ENCODE measurements at regions of chr4 and their contacts with region 1.

Region 1: DNA sequence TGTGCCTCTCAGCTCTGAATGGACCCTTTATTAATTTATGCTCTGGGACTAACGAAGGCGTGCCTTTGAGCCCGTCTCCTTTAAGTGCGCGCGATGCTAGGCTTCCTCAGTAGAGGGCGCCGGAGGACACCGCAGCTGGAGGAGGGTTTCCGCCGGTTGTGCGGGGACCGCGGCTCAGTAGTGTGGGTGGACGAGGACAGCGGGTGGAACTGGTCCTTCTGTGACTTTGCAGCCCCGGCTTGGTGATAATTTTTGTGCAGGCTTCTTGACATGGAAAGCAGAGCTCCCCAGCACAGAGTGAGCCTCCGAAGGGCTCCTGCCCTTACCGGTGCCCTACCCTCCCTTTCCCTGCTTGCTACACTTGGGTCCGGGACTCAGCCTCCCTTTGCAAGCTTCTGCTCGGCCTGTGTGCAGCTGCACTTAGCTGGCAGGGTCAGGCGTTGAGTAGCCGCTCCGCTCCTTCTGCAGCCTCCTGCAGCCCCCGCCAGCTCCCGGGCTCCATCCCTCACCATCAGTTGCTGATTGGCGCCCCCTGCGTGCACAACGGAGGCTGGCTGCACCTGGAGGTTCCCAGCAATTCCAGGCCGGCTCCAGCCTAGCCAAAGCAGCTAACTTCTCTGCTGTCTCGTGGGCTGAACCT is 26.8 kb upstream of the BOD1L1 start:
- DNase-seq: peak; percentile 67
- H3K4me3 ChIP-seq: peak overlapping the region; percentile 12 to 26
- H3K27ac ChIP-seq: no peak overlapping the region
- H3K4me1 ChIP-seq: no peaks in the 10 kb centered on the region
- H3K27me3 ChIP-seq: no peaks in the 10 kb centered on the region
- CTCF ChIP-seq: peak in 3 of 4 experiments; percentile 48 to 78 (median 64)
- POLR2A ChIP-seq: no peak

Region 2: DNA sequence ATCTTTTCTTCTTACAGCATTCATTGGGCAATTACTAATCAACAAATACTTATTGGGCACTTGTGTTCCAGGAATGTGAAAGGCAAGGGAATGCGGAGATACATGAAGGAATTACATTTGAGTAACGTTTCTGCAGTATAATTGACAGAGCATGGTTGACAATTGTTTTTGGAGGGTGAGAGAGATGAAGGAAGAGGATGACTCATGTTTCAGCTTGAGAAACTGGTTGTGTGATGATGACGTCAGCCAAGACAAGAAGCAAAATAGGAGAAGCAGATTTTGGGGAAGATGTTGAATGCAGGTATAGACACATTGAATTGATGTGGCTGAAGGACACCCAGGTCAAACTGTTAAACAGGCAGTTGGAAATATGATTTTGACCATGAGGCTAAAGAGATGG is 1340.0 kb after region 1 on chr4:
- intact Hi-C with region 1: loop called (anchors 10 kb)
- DNase-seq: no peak
- H3K4me3 ChIP-seq: no peak overlapping the region
- H3K27ac ChIP-seq: no peak overlapping the region
- H3K4me1 ChIP-seq: no peaks in the 10 kb centered on the region
- H3K27me3 ChIP-seq: no peaks in the 10 kb centered on the region
- CTCF ChIP-seq: no peak
- POLR2A ChIP-seq: no peak

Region 3: GRCh38 chr4:15162465-15163283 is 1508.4 kb after region 1 on chr4:
- intact Hi-C with region 1: loop called (anchors 2 kb)
- DNase-seq: no peak
- H3K4me3 ChIP-seq: no peak overlapping the region
- H3K27ac ChIP-seq: peak overlapping the region; percentile 3
- H3K4me1 ChIP-seq: no peaks in the 10 kb centered on the region
- H3K27me3 ChIP-seq: no peaks in the 10 kb centered on the region
- CTCF ChIP-seq: peak in 3 of 4 experiments; percentile 39 to 49 (median 47)
- POLR2A ChIP-seq: no peak